Astrocyte of the cerebellum (primary cell): ENCODE measurements at regions of chr7 and their contacts with region 1.

Region 1: DNA sequence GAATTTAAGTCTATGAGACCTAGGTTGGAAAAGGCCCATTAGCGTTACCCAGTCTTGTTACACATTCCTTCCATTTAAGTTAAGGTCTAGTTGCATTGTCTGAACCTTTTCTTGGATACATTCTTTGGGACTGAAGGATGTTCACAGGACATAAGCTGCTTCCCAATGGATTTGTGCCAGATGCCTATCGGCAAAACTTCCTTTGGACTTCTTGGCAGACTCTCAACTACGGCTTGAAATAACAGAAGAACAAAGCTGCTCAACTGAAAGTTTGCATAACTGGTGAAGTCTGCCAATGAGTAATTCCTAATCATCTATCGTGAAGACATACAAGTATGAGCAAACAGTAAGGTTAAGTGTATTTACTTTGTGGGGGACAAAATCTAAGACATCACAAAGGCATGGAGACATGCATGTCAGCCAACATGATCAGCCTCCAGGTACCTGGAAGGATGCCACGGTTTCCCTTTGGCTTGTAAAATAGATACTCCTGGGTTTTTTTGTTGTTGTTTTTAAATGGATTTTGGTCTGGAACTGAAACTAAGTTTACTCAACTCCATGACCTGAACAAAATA is 35.4 kb downstream of the MALSU1 start:
- DNase-seq: peak; percentile 98
- H3K4me3 ChIP-seq: no peak overlapping the region
- CTCF ChIP-seq: no peak

Region 2: GRCh38 chr7:22872096-22872807 is 462.3 kb before region 1 on chr7:
- in situ Hi-C with region 1: no loop called
- DNase-seq: no peak
- H3K4me3 ChIP-seq: no peak overlapping the region
- CTCF ChIP-seq: no peak

Region 3: GRCh38 chr7:22952286-22953015 is 382.1 kb before region 1 on chr7:
- in situ Hi-C with region 1: no loop called
- DNase-seq: no peak
- H3K4me3 ChIP-seq: no peak overlapping the region
- CTCF ChIP-seq: no peak

Region 4: GRCh38 chr7:23287612-23288011 is 47.0 kb before region 1 on chr7:
- in situ Hi-C with region 1: loop called (anchors 5 kb)
- DNase-seq: no peak
- H3K4me3 ChIP-seq: no peak overlapping the region
- CTCF ChIP-seq: no peak